A549 (cell line): ENCODE measurements at regions of chr1 and their contacts with region 1.

Region 1: DNA sequence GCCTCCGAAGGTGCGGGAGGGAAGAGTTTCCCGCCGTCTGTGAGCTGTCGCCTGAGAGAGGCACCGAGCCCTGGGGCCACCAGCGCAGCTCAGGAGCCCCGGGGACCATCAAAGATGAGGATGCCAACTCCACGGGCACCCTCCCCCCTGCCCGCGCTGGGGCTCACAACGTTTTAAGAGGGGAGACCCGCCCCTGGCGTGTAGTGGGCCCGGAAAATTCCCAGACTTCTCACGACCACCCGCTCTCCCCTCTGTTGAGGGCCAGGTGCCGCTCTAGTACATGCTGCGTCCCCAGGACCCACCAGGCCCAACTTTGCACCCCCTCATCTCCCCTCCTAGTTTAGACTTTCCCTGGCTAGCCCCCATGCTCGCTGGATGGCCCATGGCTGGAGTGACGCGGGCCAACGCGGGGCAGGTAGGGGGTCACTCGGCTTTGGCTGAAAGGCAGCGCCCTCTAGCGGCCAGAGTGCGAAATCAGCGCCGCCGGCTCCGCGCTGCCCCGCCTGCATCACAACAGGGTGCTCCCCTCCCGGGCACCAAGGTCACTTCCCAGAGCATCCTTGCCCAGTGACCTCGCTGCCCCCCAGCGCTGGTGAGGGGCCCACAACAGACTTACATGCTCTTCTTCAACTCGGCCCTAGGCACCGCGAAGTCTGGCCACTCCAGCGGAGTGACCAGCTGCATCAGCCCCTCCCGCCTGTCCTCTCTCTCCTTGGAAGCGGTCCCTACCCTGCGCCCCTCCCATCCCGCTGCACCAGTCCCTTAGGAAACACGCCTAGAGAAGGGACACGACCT is 1.8 kb downstream of the CD160 start:
- DNase-seq: peak; percentile 61 to 62
- ATAC-seq: peak; percentile 92 to 97
- H3K4me3 ChIP-seq: peak overlapping the region; percentile 53
- H3K27ac ChIP-seq: peak overlapping the region; percentile 82 to 88
- H3K4me1 ChIP-seq: peaks cover 13% of the 10 kb centered on the region
- CTCF ChIP-seq: peak; percentile 93
- EP300 ChIP-seq: no peak
- POLR2A ChIP-seq: no peak
- RAD21 ChIP-seq: peak; percentile 85 to 95

Region 2: DNA sequence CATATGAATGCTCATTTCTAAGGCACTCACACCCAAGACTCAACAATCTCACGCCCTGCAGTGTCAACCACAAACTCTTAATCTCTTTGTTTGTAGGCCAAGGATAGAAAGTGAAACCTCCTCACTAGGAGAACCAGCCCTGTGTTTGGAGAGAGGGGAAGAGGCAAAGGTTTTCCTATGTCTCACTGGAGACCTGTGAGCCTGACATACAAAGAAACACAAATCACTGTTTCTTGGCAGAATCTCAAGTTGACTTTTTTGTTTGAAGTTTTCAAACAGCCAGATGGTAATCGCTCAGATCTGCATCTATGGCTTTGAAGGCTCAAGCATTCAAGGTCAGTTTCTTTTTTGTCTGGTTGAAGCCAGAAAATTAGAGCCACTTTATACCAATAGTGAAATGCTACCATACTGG is 30.4 kb before region 1 on chr1:
- CTCF ChIA-PET with region 1: interaction called, 21 read pairs
- POLR2A ChIA-PET with region 1: no interaction called
- DNase-seq: no peak
- ATAC-seq: peak; percentile 39 to 48; a peak in 2 of 6 replicates
- H3K4me3 ChIP-seq: no peak overlapping the region
- H3K27ac ChIP-seq: peak overlapping the region in 1 of 2 experiments; percentile 36; a peak in 1 of 6 replicates
- H3K4me1 ChIP-seq: peaks cover 14% of the 10 kb centered on the region
- CTCF ChIP-seq: no peak
- EP300 ChIP-seq: no peak
- POLR2A ChIP-seq: no peak
- RAD21 ChIP-seq: no peak

Region 3: GRCh38 chr1:145706086-145706680 is 14.9 kb before region 1 on chr1:
- CTCF ChIA-PET with region 1: interaction called, 35 read pairs
- POLR2A ChIA-PET with region 1: no interaction called
- DNase-seq: peak; percentile 55 to 84
- ATAC-seq: peak; percentile 79 to 81
- H3K4me3 ChIP-seq: no peak overlapping the region
- H3K27ac ChIP-seq: peak overlapping the region; percentile 56 to 78; a peak in 5 of 6 replicates
- H3K4me1 ChIP-seq: peaks cover 40% of the 10 kb centered on the region
- CTCF ChIP-seq: no peak
- EP300 ChIP-seq: no peak
- POLR2A ChIP-seq: no peak
- RAD21 ChIP-seq: no peak

Region 4: DNA sequence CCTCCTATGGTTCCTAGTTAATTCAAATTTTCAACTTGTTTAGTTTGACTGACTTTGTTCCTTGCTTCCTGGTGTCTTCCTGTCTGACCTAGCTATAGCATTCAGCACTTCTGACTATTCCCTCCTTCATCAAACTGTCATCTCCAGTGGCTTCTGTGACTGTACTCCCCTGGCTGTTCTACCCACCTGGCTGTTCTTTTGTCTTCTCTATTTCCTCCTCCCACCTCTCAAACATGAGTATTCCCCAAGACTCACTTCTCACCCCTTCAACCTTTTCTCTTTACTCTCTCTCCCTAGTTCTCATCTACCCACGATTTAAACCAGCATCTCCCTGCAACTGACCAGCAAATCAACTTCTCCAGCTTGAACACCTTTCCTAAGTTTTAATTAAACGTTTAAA is 12.5 kb after region 1 on chr1:
- CTCF ChIA-PET with region 1: interaction called, 20 read pairs
- POLR2A ChIA-PET with region 1: no interaction called
- DNase-seq: no peak
- ATAC-seq: no peak; a peak in 1 of 6 replicates
- H3K4me3 ChIP-seq: no peak overlapping the region
- H3K27ac ChIP-seq: no peak overlapping the region
- H3K4me1 ChIP-seq: peaks cover 9% of the 10 kb centered on the region; the same call in 2 of the 3 replicates
- CTCF ChIP-seq: no peak
- EP300 ChIP-seq: no peak
- POLR2A ChIP-seq: no peak
- RAD21 ChIP-seq: no peak

Region 5: DNA sequence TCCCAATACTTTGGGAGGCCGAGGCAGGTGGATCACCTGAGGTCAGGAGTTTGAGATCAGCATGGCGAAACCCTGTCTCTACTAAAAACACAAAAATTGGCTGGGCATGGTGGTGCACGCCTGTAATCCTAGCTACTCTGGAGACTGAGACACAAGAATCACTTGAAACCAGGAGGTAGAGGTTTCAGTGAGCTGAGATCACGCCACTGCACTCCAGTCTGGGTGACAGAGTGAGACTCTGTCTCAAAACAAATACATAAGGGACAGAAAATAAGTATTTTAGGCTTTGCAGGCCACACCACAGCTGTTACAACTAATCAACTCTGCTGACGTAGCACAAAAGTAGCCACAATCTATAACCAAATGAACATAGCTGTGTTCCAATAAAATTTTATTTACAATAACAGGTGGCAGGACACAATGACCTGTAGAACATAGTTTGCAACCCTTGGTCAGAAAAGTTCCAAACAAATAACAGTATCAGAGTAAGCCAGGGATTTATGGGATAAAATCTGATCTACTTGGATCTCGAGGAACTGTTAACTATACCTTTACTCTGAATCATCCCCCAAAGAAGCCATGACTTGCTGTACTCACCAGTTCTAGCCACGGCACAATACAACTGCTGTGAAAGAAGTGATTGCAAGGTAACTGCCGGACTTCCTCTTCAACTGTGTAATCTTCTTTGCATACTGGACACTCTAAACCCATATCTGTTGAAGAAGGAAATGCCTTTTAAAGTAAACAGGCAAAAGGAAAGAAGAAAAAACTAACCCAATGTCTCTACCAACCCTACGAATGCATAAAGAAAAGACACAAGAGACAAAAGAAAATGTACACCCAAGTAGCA is 26.5 kb after region 1 on chr1:
- CTCF ChIA-PET with region 1: interaction called, 11 read pairs
- POLR2A ChIA-PET with region 1: no interaction called
- DNase-seq: no peak
- ATAC-seq: no peak
- H3K4me3 ChIP-seq: no peak overlapping the region
- H3K27ac ChIP-seq: no peak overlapping the region
- H3K4me1 ChIP-seq: peaks cover 13% of the 10 kb centered on the region; the same call in 2 of the 3 replicates
- CTCF ChIP-seq: no peak
- EP300 ChIP-seq: no peak
- POLR2A ChIP-seq: no peak
- RAD21 ChIP-seq: no peak

Region 6: DNA sequence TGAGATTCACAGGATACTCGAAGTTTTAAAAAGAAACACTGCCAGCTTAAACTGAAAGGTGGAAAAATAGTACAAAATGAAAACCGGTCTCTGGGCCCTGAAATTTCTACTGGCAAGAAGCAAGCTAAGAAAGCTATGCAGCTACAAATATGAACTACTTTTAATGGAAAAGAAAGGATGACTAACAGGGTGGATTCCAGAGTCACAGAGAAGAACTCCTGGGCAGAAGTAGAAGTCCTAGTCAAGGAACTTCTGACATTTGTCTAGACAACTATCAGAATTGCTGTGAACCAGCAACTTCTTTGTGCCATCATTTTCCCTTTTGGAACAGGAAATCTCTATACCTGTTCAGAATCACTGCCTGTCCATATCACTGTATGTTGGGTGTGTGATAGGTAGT is 36.3 kb after region 1 on chr1:
- CTCF ChIA-PET with region 1: interaction called, 22 read pairs
- POLR2A ChIA-PET with region 1: no interaction called
- DNase-seq: no peak
- ATAC-seq: no peak
- H3K4me3 ChIP-seq: no peak overlapping the region
- H3K27ac ChIP-seq: no peak overlapping the region
- H3K4me1 ChIP-seq: no peaks in the 10 kb centered on the region; the same call in 1 of the 3 replicates
- CTCF ChIP-seq: no peak
- EP300 ChIP-seq: no peak
- POLR2A ChIP-seq: no peak
- RAD21 ChIP-seq: no peak

Region 7: GRCh38 chr1:145823565-145824498 is 102.8 kb after region 1 on chr1 and contains the starts of genes POLR3C and RNF115:
- CTCF ChIA-PET with region 1: interaction called, 11 read pairs
- POLR2A ChIA-PET with region 1: interaction called, 6 read pairs
- DNase-seq: peak; percentile 83 to 93
- ATAC-seq: peak; percentile 96 to 97
- H3K4me3 ChIP-seq: peak within 1 kb of the TSS; percentile 75
- H3K27ac ChIP-seq: peak within 1 kb of the TSS; percentile 94 to 97
- H3K4me1 ChIP-seq: peaks cover 11% of the 10 kb centered on the region
- CTCF ChIP-seq: no peak
- EP300 ChIP-seq: no peak
- POLR2A ChIP-seq: peak; percentile 60
- RAD21 ChIP-seq: peak; percentile 5 to 17; a peak in 2 of 5 replicates
- polyA plus RNA-seq, gene POLR3C: 58.3 and 65.0 TPM in 2 replicates
- polyA plus RNA-seq, gene RNF115: 18.4 and 18.8 TPM in 2 replicates

Region 8: DNA sequence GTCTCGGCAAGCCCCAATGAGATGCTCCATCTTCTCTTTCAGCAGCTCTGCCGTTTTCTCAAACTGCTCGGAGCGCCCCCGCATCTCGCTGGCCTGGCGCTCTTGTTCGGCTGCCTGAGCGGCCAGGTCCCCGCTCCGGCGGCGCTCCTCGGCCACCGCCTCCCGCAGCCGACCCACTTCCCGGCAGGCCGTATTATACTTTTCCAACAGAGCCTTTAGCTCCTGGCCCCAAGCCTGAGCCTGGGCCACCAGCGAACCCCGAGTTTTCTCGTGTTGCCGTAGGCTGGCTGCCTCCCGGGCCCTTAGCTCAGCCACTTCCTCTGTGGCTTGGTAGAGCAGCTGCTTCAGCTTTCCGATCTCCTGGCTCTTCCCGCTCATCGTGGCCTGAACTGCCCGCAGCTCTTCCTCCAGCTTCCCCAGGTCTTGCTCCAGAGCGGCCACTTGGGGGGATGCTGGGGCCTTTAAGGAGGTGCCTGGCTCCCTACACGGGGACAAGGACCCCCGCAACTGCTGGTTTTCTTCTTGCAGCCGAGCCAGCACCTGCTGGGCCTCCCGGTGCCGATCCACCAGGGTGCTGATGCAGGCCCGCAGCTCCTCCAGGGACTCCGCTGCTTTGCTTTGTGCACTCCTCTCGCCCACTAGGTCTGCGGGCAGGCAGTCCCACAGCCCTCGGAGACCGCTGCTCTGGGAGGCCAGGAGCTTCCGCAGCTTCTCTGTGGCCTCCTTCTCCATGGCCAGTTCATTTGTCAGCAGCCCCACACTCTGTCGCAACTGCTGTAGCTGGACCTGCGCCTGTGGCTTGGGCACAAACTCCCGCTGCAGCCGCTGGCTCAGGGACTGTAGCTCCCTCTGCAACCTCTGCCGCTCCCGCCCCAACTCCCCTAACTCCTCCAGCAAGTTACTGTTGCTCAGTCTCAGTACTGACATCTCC is 151.2 kb after region 1 on chr1:
- CTCF ChIA-PET with region 1: no interaction called
- POLR2A ChIA-PET with region 1: no interaction called
- DNase-seq: no peak
- ATAC-seq: peak in 1 of 2 experiments; percentile 22; a peak in 2 of 6 replicates
- H3K4me3 ChIP-seq: no peak overlapping the region
- H3K27ac ChIP-seq: no peak overlapping the region
- H3K4me1 ChIP-seq: no peaks in the 10 kb centered on the region
- CTCF ChIP-seq: no peak
- EP300 ChIP-seq: no peak
- POLR2A ChIP-seq: no peak
- RAD21 ChIP-seq: no peak